ENCODE measurements at regions of chr2 and their contacts with region 1.

Region 1: GRCh38 chr2:207503234-207503633 is 26.5 kb upstream of the CREB1 start:
- DNase-seq: no peak
- ATAC-seq: no peak
- H3K4me3 Mint-ChIP-seq: no peak overlapping the region
- H3K27ac Mint-ChIP-seq: no peak overlapping the region
- H3K4me1 Mint-ChIP-seq: peaks cover 67% of the 10 kb centered on the region
- H3K27me3 Mint-ChIP-seq: no peaks in the 10 kb centered on the region

Region 2: DNA sequence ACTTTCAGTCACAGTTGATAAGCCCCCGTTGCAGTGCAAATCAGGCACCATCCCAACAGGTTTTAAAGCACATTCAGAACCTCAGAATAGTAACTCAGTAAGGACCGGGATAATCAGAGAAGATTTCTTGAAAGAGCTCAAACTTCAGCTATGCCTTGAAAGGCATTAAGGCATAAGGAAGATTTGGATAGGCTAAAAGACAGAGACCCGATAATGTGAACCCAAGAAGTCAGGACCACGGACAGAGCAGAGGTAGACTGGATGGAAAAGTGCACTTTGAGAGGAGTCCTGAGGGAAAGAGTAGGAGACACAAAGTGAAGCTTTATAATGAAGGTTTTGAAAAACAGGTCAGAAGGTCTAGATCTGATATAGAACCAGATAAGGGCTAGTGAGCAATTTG is 300.6 kb before region 1 on chr2:
- POLR2A ChIA-PET with region 1: no interaction called
- DNase-seq: no peak
- ATAC-seq: no peak
- H3K4me3 Mint-ChIP-seq: no peak overlapping the region
- H3K27ac Mint-ChIP-seq: no peak overlapping the region
- H3K4me1 Mint-ChIP-seq: no peaks in the 10 kb centered on the region
- H3K27me3 Mint-ChIP-seq: no peaks in the 10 kb centered on the region

Region 3: GRCh38 chr2:207529330-207530159 is 26.3 kb after region 1 on chr2 and contains the start of gene CREB1:
- POLR2A ChIA-PET with region 1: interaction called, 28 read pairs
- DNase-seq: peak; percentile 100
- ATAC-seq: peak; percentile 91
- H3K4me3 Mint-ChIP-seq: peak within 1 kb of the TSS; percentile 100
- H3K27ac Mint-ChIP-seq: peak within 1 kb of the TSS; percentile 100
- H3K4me1 Mint-ChIP-seq: peaks cover 41% of the 10 kb centered on the region
- H3K27me3 Mint-ChIP-seq: peaks cover 3% of the 10 kb centered on the region
- total RNA-seq, gene CREB1: 97.5 to 101 TPM